A549 (cell line): ENCODE measurements at regions of chr7 and their contacts with region 1.

Region 1: DNA sequence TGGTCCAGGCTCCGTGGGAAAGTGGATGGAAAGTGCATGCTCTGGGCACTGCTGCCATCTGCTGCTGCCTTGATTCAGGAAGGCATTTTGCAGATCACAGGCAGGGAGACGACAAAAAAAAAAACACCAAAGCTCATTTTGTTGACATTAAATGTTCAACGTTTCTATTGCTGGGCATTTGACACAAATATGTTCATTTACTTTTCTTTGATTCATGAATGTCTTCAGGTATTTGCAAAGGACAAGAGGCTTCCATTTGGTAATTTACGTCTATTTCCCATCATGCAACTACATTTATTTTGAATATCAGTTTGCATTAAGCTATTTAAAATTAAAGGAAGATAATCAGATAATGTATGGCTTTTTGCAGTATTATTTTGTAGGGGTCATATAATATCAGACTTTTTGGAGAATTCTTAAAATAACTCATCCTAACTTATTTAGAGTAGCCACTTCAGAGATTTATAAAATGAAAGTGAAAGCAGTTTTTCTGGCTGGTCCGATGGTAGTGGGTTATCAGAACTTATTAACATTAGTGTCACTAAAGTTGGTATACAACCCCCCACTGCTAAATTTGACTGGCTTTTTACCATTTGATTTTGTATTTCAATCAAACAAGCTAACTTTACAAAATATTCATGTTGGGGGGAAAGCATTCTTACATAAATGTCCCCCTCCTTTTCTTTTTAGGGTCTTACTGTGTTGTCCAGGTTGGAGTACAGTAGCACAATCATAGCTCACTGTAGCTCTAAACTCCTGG is 65.3 kb downstream of the PDIA4 start:
- DNase-seq: peak; percentile 58 to 72
- ATAC-seq: peak; percentile 45 to 49; a peak in 3 of 6 replicates
- H3K4me3 ChIP-seq: peak overlapping the region; percentile 54
- H3K27ac ChIP-seq: peak overlapping the region; percentile 69 to 79
- H3K4me1 ChIP-seq: 0 out of 3 replicates have a peak, but pooled peaks cover 9% of the 10 kb centered on the region
- CTCF ChIP-seq: peak; percentile 95
- EP300 ChIP-seq: no peak
- POLR2A ChIP-seq: no peak
- RAD21 ChIP-seq: peak; percentile 96 to 97

Region 2: DNA sequence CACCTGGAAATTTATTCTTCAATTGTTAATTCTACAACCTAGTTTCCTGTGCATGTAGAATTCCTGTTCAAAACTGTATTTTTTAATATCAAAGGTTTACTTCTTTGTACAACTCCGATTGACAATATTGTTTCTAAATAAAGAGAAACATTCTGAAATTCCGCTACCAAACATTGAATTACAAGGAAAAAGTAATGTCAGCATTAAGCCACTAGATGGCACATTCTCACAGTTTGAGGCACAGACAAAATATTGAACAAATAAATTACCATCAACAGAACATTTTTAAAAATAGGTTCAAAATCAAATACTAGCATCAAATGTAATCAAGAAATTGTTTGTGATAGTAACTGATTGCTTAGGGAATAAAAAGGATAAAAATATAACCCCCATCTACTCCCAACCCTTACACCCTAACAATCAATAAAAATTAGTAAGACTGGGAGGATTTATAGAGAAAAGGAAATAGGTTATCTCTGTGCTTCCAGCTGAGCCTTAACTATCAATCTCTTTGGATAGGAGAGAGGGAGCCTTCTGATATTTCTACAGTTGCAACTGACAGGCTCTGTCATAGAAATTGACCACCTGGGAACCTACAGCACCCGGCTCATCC is 459.0 kb before region 1 on chr7:
- CTCF ChIA-PET with region 1: interaction called, 27 read pairs
- POLR2A ChIA-PET with region 1: no interaction called
- DNase-seq: peak; percentile 16 to 22
- ATAC-seq: no peak
- H3K4me3 ChIP-seq: no peak overlapping the region
- H3K27ac ChIP-seq: no peak overlapping the region
- H3K4me1 ChIP-seq: no peaks in the 10 kb centered on the region
- CTCF ChIP-seq: peak; percentile 77
- EP300 ChIP-seq: no peak
- POLR2A ChIP-seq: no peak
- RAD21 ChIP-seq: peak; percentile 74 to 79

Region 3: GRCh38 chr7:148575640-148576411 is 387.2 kb before region 1 on chr7:
- CTCF ChIA-PET with region 1: interaction called, 43 read pairs
- POLR2A ChIA-PET with region 1: no interaction called
- DNase-seq: peak; percentile 46 to 58
- ATAC-seq: peak; percentile 90 to 96; a peak in 5 of 6 replicates
- H3K4me3 ChIP-seq: no peak overlapping the region
- H3K27ac ChIP-seq: no peak overlapping the region
- H3K4me1 ChIP-seq: no peaks in the 10 kb centered on the region
- CTCF ChIP-seq: peak; percentile 77
- EP300 ChIP-seq: no peak
- POLR2A ChIP-seq: no peak
- RAD21 ChIP-seq: peak; percentile 78 to 87

Region 4: GRCh38 chr7:148856891-148857290 is 106.1 kb before region 1 on chr7:
- CTCF ChIA-PET with region 1: interaction called, 17 read pairs
- POLR2A ChIA-PET with region 1: no interaction called
- DNase-seq: no peak
- ATAC-seq: peak in 1 of 2 experiments; percentile 24; a peak in 2 of 6 replicates
- H3K4me3 ChIP-seq: no peak overlapping the region
- H3K27ac ChIP-seq: no peak overlapping the region
- H3K4me1 ChIP-seq: 0 out of 3 replicates have a peak, but pooled peaks cover 4% of the 10 kb centered on the region
- CTCF ChIP-seq: no peak
- EP300 ChIP-seq: no peak
- POLR2A ChIP-seq: no peak
- RAD21 ChIP-seq: no peak

Region 5: GRCh38 chr7:148987010-148987750 is 24.2 kb after region 1 on chr7:
- CTCF ChIA-PET with region 1: interaction called, 36 read pairs
- POLR2A ChIA-PET with region 1: no interaction called
- DNase-seq: peak; percentile 89 to 94
- ATAC-seq: peak; percentile 72 to 86
- H3K4me3 ChIP-seq: peak overlapping the region; percentile 59
- H3K27ac ChIP-seq: peak overlapping the region; percentile 61 to 76
- H3K4me1 ChIP-seq: peaks cover 16% of the 10 kb centered on the region
- CTCF ChIP-seq: no peak
- EP300 ChIP-seq: no peak
- POLR2A ChIP-seq: peak; percentile 46; the same call in 1 of the 2 replicates
- RAD21 ChIP-seq: no peak